IMR-90 (cell line): ENCODE measurements at regions of chr13 and their contacts with region 1.

Region 1: GRCh38 chr13:71378961-71379905 is 487.8 kb downstream of the DACH1 start:
- DNase-seq: no peak
- ATAC-seq: peak; percentile 61
- H3K4me3 ChIP-seq: no peak overlapping the region
- H3K27ac ChIP-seq: peak overlapping the region; percentile 63; the same call in 1 of the 2 replicates
- H3K4me1 ChIP-seq: no peaks in the 10 kb centered on the region
- H3K27me3 ChIP-seq: no peaks in the 10 kb centered on the region
- CTCF ChIP-seq: no peak
- POLR2A ChIP-seq: no peak
- RAD21 ChIP-seq: no peak

Region 2: DNA sequence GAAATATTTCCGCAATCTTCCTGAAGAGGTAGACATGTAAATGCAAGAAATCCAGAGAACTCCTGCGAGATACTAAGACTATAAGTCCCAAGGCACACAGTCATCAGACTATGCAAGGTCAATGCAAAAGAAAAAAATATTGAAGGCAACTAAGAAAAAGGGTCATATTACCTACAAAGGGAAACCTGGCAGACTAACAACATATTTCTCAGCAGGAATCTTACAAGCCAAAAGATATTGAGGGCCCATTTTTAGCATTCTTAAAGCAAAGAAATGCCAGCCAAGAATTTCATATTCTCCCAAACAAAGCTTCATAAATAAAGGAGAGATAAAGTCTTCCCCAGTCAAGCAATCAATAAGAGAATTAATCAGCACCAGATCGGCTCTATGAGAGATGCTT is 1570.1 kb before region 1 on chr13:
- CTCF ChIA-PET with region 1: no interaction called
- POLR2A ChIA-PET with region 1: no interaction called
- dilution Hi-C with region 1: no loop called
- in situ Hi-C with region 1: no loop called
- intact Hi-C with region 1: no loop called
- DNase-seq: no peak
- ATAC-seq: no peak
- H3K4me3 ChIP-seq: no peak overlapping the region
- H3K27ac ChIP-seq: no peak overlapping the region
- H3K4me1 ChIP-seq: no peaks in the 10 kb centered on the region
- H3K27me3 ChIP-seq: no peaks in the 10 kb centered on the region
- CTCF ChIP-seq: no peak
- POLR2A ChIP-seq: no peak
- RAD21 ChIP-seq: no peak

Region 3: DNA sequence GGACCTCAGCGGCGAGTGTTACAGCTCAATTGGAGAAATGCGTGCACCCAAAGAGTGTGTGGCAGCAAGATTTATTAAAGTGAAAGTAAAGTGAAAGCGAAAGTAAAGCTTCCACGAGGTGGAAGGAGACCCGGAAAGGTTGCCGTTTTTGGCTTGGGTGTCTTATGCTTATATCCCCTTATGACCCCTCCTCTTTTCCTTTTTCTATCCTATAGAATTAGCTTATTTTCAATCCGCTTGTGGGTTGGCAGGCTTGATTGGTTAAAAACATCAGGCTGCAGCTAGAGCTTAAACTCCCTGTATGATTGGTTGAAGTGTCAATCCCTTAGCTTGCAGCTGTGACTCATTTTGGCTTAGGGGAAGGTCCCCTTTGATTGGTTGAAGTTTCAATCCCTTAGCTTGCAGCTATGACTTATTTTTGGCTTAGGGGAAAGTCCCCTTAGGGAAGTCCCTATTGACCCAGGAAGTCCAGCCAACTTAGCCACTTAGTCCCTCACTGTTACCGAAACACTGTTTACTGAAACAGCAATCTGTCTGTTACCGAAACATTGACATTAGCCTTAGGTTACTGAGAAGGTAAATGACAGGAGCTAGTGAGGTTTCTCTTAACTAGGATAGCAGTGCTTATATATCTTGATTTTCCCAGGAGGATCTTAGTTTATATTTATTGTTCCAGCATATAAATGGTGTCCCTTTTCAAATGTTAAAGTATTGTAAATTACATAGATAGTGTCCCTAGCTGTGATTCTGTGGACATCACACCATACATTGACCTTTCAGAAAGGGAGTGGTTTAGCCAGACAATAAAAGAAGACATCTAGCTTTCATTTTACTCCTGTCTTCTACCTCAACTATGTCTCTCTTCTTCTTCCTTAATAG is 88.0 kb before region 1 on chr13:
- CTCF ChIA-PET with region 1: no interaction called
- POLR2A ChIA-PET with region 1: no interaction called
- dilution Hi-C with region 1: no loop called
- in situ Hi-C with region 1: loop called (anchors 25 kb)
- intact Hi-C with region 1: no loop called
- DNase-seq: peak; percentile 1
- ATAC-seq: no peak
- H3K4me3 ChIP-seq: no peak overlapping the region
- H3K27ac ChIP-seq: no peak overlapping the region
- H3K4me1 ChIP-seq: no peaks in the 10 kb centered on the region
- H3K27me3 ChIP-seq: no peaks in the 10 kb centered on the region
- CTCF ChIP-seq: no peak
- POLR2A ChIP-seq: no peak
- RAD21 ChIP-seq: no peak